ENCODE measurements at regions of chr12 and their contacts with region 1.

Region 1: DNA sequence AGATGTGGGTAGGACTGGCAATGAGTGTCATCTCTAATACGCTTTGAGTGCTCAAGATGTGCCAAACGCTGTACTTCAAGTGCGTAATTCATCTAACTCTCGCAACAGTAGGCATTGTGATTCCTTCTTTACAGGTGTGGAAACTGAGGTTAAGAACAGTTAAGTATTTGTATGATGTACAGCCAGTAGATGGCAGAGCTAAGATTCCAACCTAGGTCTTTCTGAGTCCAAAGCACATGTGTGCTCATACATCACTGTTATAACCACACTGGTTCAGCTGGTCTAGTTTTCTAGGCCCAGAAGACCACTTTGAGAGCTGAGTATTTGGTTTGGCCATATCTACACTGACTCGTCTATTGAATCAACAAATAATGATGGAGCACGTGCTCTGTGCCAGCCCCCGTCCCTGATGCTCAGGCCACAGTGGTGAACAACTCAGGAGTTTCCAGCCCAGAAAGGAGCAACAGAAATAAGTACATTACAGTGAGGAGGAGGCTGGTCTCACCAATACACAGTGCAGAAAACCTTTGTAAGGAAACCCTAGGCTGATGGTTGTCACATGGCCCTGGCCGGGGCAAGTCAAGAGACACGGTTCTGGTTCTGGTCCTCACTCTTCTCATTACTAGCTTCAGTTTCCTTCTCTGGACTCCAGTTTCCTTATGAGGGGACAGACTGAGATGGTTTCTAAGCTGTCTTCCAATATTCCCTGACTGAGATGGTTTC is 69.3 kb upstream of the SCN8A start:
- DNase-seq: peak; percentile 29
- ATAC-seq: no peak
- H3K4me3 ChIP-seq: no peak overlapping the region
- H3K27ac ChIP-seq: no peak overlapping the region
- H3K4me1 ChIP-seq: no peaks in the 10 kb centered on the region
- H3K27me3 ChIP-seq: peaks cover 2% of the 10 kb centered on the region; the same call in 1 of the 2 replicates
- CTCF ChIP-seq: 0 out of 2 replicates have a peak, but pooled peaks have one; percentile 30
- POLR2A ChIP-seq: no peak
- RAD21 ChIP-seq: no peak

Region 2: DNA sequence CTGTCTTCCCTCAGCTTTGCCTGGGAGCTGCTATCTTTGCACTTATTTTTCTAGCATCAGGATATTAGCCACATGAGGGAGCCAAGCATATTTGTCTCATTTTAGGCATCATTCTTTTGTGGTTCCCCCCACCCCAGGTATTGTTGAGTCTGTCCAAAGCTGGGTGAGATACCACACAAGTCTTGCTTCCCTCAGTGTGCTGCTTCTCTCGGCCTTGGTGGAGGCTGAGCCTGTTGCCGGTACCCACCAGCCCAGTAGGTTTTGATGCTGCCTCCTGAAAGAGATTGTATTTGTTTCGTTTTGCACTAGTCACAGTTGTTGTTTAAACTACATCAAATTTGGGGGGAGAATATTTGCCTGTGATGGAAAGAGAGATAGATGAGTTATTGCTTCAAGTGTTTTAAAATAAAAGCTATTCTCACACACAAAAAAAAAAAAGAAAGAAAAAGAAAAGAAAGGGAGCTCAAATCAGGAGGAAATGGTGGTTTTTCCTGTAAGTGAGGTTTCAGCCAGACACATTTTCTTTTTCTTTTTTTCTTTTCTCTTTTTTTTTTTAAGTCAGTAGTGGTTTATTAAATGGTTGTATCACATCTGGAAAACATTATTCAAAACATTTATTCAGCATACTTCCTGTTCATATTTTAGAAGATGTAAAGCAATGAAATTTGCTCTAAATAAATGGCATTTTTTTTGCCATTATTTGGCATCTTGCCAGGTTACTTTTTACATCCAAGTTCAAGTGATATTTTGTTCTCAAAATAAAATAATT is 38.6 kb before region 1 on chr12:
- CTCF ChIA-PET with region 1: no interaction called
- POLR2A ChIA-PET with region 1: no interaction called
- dilution Hi-C with region 1: no loop called
- in situ Hi-C with region 1: no loop called
- intact Hi-C with region 1: loop called (anchors 1 kb)
- DNase-seq: no peak
- ATAC-seq: no peak; the same call in 1 of the 2 replicates
- H3K4me3 ChIP-seq: no peak overlapping the region
- H3K27ac ChIP-seq: no peak overlapping the region
- H3K4me1 ChIP-seq: peaks cover 2% of the 10 kb centered on the region; the same call in 1 of the 2 replicates
- H3K27me3 ChIP-seq: no peaks in the 10 kb centered on the region
- CTCF ChIP-seq: no peak
- POLR2A ChIP-seq: no peak
- RAD21 ChIP-seq: no peak

Region 3: GRCh38 chr12:51823875-51824565 is 302.3 kb after region 1 on chr12:
- CTCF ChIA-PET with region 1: no interaction called
- POLR2A ChIA-PET with region 1: no interaction called
- dilution Hi-C with region 1: no loop called
- in situ Hi-C with region 1: no loop called
- intact Hi-C with region 1: no loop called
- DNase-seq: peak; percentile 73
- ATAC-seq: peak; percentile 33; the same call in 1 of the 2 replicates
- H3K4me3 ChIP-seq: no peak overlapping the region
- H3K27ac ChIP-seq: no peak overlapping the region
- H3K4me1 ChIP-seq: peaks cover 3% of the 10 kb centered on the region; the same call in 1 of the 2 replicates
- H3K27me3 ChIP-seq: no peaks in the 10 kb centered on the region; the same call in 1 of the 2 replicates
- CTCF ChIP-seq: peak; percentile 68
- POLR2A ChIP-seq: no peak
- RAD21 ChIP-seq: peak; percentile 83

Measured in IMR-90 (cell line).